PC-3 (cell line): ENCODE measurements at regions of chr13 and their contacts with region 1.

Region 1: GRCh38 chr13:43180837-43181236 is 157.5 kb downstream of the DNAJC15 start:
- DNase-seq: no peak
- ATAC-seq: no peak
- H3K4me3 ChIP-seq: no peak overlapping the region
- H3K27ac ChIP-seq: no peak overlapping the region
- H3K4me1 ChIP-seq: no peaks in the 10 kb centered on the region
- H3K27me3 ChIP-seq: no peaks in the 10 kb centered on the region
- CTCF ChIP-seq: no peak

Region 2: DNA sequence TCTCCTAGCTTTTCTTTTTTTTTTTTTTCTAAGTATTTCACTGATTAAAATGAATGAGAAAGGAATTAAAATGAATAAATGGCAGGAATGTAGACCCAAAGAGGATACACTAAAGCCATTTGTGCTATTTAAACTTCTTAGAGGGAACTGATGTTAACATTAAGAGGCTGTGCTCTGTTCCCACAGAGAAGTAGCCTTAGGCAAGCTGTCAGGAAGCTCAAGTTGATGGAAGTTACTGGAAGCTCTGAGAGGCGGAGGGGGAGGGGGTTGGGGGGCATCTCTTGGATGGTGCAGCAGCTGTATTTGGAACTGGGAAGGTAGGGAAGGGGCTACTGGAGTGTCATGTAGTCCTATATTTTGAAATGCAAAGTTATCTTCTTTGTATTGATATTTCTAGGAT is 10.7 kb after region 1 on chr13:
- CTCF ChIA-PET with region 1: no interaction called
- POLR2A ChIA-PET with region 1: interaction called, 39 read pairs
- intact Hi-C with region 1: no loop called
- DNase-seq: no peak
- ATAC-seq: no peak
- H3K4me3 ChIP-seq: no peak overlapping the region
- H3K27ac ChIP-seq: no peak overlapping the region
- H3K4me1 ChIP-seq: no peaks in the 10 kb centered on the region
- H3K27me3 ChIP-seq: no peaks in the 10 kb centered on the region
- CTCF ChIP-seq: no peak